Left colon (tissue), 2 donors: ENCODE measurements at regions of chr3 and their contacts with region 1.

Region 1: DNA sequence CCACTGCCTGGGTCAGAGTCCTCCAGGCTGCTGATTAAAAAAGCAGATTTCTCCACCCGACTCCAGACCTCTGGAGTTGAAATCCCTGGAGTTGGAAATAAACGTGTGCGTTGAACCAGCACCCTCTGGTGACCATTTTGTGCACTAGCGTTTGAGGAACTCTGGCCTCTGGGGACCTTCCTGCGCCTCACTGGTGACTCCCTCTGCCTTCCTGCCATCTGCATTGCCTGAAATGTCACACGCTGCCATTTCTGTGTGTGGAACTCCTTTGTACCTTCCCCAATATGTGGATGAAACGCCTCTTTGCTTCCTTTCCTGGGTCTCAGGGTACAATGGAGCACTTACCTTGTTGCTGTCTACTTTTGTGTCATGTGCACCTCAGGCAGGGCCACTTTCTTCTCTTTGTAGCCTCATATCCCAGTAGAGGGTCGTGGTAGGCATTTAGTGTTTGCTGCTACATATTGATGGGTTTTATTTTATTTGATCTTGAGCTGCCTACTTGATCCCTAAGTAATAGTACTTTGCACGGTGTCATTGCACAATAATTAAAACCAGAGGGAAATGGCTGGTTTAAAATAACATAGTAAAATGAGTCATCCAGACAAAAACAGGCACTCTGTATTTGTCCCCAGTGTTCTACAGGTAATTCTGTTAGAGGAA is 56.8 kb downstream of the GPR171 start:
- DNase-seq: peak; percentile 64 to 66
- ATAC-seq: peak; percentile 97

Region 2: DNA sequence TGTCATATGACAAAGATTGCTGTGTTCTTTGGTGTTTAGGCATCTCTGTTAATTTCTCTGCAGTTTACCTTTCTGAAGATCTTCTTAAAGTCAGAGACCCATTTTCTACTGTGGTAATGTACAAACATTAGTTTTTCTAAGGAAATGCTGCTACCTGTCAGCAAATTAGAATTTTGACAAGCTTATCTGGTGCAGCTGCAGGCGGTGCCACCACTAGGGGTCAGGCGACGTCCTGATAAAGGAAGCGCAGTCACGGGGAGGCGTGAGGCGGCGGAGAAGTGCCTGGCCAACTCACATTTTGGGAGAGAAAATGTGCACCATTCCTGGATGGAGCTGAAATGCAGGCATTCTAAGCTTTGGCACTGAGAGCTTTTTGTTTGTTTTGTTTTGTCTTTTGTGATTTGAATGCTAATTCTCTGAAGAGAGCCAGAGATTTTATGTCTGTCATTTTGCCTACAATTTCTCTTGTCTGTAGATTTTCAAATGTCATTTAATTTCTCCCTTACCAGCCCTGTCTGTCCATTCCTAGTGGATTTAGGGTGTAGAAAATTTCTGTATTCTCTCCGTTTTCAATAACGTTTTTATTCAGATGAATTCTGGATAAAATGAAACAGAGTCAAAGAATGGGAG is 358.3 kb before region 1 on chr3:
- intact Hi-C with region 1: loop called (anchors 5 to 10 kb)
- DNase-seq: peak; percentile 76 to 94
- ATAC-seq: peak; percentile 81

Region 3: GRCh38 chr3:150798122-150798626 is 348.0 kb before region 1 on chr3:
- intact Hi-C with region 1: loop called in 1 of 2 experiments (anchors 10 kb)
- DNase-seq: no peak
- ATAC-seq: peak; percentile 60

Region 4: DNA sequence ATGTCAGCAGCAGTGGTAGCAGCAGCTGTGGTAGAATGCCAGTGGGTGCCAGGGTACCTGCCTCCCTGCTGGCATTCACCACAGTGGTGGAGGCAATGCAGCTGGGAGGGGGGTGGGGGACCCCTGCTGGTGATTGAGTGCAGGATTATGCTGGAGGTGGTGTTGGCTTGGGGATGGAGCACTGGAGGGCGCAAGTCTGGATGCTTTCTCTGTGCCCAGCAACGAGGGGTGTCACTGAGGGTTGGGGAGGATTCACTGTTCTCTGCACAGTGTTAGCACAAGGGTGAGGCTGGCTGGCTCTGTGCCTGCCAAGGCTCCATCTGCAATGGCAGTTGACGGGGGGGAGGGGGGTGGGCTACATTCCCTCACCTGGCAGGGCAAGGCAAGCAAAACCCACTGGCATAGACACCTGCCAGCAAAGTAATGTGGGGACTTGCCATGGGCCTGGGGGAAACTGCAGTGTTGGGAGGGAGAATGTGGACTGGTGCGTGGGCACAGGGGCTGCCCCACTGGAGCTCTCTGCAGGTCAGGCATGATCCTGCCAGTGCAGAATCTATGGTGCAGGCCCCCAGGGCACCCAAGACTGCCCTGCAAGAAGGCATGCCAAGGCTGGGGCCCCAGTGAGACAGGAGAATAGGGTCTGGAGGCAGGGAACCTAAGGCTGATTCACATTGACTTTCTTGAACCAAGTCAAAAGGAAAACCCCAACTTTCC is 305.2 kb before region 1 on chr3:
- intact Hi-C with region 1: no loop called
- DNase-seq: no peak
- ATAC-seq: no peak

Region 5: DNA sequence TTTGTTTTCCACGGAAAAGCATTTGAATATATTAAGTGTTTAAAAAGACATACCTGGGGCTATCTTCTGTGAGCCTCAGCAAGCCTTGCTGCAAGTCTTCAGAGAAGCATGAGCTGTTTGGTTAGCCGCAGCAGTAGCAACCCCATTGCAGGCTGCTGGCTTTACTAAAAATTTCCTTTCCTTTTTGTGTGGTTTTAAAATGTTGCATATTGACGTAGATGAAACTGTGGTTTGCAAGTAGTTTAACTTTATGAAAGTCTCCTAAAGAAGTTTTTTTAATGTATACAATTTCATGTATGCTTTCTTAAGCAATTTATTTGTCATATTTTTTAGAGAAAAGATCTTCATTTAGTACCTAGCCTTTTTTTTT is 56.8 kb after region 1 on chr3 and contains the start of gene GPR171:
- intact Hi-C with region 1: no loop called
- DNase-seq: no peak
- ATAC-seq: no peak
- total RNA-seq, gene GPR171: 1.7 to 1.9 TPM